ENCODE measurements at regions of chr22 and their contacts with region 1.

Region 1: GRCh38 chr22:25048659-25049647 is 96.4 kb downstream of the KIAA1671 start:
- H3K4me3 Mint-ChIP-seq: no peak overlapping the region
- H3K27ac Mint-ChIP-seq: no peak overlapping the region
- H3K4me1 Mint-ChIP-seq: peaks cover 5% of the 10 kb centered on the region
- H3K27me3 Mint-ChIP-seq: peaks cover 5% of the 10 kb centered on the region

Region 2: DNA sequence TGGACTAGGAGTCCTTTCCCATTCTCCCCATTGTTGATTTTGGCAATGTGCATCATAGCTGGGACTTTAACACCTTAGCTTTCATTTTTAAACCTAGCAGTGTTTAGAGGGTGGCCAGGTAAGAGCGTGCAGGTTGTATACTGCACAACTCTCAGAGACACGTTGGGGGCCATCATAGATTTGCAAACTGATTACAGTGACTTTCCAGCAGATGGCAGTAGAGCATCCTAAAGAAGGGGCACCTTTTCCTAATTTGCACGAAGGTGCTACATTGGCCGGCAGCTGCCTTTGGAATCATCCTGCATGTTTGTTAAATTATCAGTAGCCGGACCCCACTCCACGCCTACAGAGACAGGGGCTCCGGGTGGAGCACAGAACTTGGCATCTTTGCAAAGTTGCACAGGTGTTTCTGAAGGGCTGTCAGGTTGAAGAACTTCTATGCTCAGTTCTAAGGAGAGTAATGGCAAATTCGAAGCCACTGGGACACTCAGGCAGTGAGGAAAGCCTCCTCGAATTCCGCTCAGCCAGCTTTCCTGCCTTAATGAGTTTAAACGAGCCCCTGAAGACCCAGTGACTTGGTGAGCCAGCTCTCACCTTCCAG is 110.1 kb before region 1 on chr22:
- intact Hi-C with region 1: loop called (anchors 2 kb)
- H3K4me3 Mint-ChIP-seq: no peak overlapping the region
- H3K27ac Mint-ChIP-seq: no peak overlapping the region
- H3K4me1 Mint-ChIP-seq: no peaks in the 10 kb centered on the region
- H3K27me3 Mint-ChIP-seq: no peaks in the 10 kb centered on the region

Region 3: GRCh38 chr22:24951942-24952836 is 96.8 kb before region 1 on chr22 and contains the start of gene KIAA1671:
- intact Hi-C with region 1: loop called (anchors 1 kb)
- H3K4me3 Mint-ChIP-seq: peak within 1 kb of the TSS; percentile 82
- H3K27ac Mint-ChIP-seq: peak within 1 kb of the TSS; percentile 56
- H3K4me1 Mint-ChIP-seq: peaks cover 13% of the 10 kb centered on the region
- H3K27me3 Mint-ChIP-seq: peaks cover 61% of the 10 kb centered on the region

Measured in dendritic cell treated with granulocyte-macrophage colony-stimulating factor and Interleukin-4, amounts not matched to agents 40 ng/mL and 50 ng/mL, for 4 days (primary cell).